ENCODE measurements at regions of chr5 and their contacts with region 1.

Region 1: DNA sequence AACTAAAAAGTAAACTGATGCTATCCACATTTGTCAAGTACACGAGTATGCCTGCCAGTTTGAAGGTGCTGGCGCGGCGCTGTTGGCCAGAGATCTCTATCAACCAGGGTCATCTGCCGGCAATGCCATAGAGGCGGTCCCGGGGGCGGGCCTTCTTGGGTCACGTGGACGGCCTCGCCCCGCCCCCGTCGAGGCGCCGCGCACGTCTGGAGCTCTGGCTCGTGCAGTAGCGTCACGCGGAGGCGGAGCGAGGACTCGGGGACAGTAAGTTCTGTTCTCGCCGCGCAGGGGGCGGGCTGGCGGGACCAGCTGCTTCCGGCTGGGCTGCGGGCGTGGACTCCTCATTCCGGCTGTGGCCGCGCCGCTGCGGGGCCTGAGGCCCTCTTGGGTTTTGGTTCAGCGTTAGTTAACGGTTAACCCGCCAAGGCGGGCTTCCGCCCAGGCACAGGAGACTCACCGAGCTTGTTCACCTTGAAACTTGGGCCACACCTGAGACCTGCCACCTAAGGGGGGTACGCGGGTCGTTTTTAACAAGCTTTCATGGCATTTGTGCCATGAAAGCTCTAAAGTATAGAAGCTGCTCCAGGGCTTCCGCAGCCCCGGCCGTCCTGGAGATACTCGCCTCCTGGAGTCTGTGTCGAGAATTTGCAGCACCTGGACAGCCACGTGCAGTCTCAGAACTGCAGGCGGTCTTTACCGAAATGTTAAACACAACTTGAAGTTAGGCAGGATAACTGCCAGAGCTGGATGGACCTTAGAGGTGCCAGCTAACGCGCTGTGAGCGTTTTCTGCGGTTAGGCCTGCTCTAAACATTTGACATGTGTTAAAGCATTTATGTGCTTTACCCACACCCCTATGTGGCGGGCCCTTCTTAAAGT is at the start of gene RFESD:
- DNase-seq: peak; percentile 99
- ATAC-seq: peak; percentile 99
- total RNA-seq, gene RFESD: 3.9 TPM

Region 2: DNA sequence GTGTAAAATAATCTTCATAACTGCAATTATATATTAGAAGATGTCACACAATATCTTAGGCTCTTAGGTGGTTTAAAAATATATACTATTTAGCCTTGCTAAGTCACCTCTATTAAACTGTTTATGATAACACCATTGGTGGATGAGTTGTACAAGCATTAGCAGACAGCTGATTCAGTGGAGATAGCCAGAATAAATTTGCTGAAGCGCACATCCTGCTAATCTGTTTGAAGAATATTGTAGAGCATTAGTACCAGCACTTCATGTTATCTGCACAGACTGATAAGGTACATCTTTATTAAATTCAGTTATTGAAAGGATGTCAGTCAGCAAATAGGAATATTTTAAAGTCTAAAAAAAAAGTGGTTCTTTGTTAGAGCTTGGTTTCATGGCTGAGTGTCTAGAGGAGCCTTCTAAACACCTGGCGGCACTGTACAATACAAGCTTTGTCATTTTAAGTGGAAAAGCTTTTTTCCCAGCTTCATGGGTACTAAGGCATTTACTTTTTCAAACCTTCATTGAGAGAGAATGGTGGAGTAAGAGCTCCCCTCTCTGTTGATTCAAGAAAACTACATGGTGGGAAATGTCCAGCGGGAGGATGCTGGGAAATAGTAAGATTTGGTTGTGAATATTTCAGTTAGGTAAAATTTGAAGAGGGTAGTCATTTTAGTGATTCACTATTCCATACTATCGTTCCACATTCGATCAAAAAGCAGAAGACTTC is 753.2 kb before region 1 on chr5:
- intact Hi-C with region 1: no loop called
- DNase-seq: no peak
- ATAC-seq: peak; percentile 73

Region 3: GRCh38 chr5:95730730-95731570 is 84.2 kb after region 1 on chr5 and contains the start of gene RHOBTB3:
- intact Hi-C with region 1: loop called (anchors 10 kb)
- DNase-seq: peak; percentile 95
- ATAC-seq: peak; percentile 89
- total RNA-seq, gene RHOBTB3: 192 TPM

Region 4: DNA sequence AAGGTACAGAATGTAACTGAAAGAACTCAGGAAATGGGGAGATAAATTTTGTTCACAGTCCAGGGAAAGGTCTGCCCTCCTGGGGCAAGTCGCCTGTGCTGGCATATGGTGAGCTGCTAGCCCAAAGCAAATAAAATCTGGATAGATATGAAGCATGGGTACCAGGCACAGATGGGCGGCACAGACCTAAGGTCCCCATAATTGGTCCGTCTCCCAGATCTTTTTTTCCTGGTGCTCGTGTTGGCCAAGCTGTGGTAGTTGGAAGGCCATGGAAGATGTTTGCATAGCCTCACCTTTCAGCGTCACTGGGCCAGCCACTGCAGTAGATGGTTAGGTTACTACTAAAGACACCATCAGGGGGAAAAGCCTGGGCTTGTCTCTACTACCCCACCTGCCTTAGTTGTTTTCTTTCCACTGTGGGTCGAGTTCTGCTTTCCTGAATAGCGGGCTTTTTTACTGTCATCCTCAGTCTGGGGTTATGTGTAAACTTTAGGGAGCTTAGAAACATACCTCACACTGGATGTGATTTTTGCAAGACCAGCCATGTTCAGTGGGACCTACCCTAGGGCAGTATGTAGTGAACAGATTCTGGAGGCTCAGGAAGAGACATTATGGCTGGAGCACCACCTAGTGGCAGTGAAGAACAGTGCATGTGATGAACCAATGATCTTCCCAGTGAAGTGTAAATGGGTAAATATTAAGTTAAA is 199.9 kb after region 1 on chr5:
- intact Hi-C with region 1: loop called (anchors 10 kb)
- DNase-seq: peak; percentile 84
- ATAC-seq: peak; percentile 80

Region 5: DNA sequence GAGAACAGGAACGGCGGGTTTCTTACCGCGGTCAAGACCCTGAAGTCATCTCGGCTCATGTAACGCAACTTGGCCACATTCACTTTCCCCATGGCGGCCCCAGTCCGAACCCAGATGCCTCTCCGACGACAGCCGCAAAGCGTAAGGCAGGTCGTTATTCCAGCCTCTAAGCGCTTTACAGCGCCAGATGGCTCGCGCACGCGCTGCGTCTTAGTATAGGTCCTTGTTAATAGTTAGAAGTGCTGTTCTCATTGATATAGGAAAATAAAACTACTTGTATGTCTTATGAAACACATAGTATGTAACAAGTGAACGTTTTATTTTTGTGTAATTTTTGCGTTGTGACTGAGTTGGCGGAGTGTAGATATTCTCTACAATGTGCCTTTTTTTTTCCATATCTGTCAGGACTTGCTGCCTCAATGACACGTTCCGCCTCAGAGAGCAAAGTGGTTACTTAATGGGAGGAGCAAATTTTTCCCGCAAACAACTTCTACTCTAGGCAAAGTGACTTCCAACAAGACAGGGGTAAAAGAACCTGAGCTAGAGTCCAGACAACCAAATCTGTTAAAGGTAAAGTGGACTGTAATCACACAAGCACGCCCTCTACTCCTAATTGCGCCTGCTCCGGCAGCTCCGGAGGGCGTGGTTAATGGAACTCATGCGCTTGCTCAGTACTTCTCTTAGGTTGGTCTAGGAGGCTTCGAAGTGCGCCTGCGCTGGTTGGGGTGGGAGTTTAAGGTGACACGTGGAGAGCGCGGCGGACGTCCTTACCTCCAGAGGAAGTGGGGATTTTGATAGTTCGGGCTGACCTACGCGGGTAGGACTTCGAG is 1536.5 kb after region 1 on chr5 and contains the start of gene RIOK2:
- intact Hi-C with region 1: loop called (anchors 5 kb)
- DNase-seq: peak; percentile 93
- ATAC-seq: peak; percentile 98
- total RNA-seq, gene RIOK2: 17.9 TPM

Measured in sciatic nerve (tissue), 2 donors.